ENCODE measurements at regions of chr11 and their contacts with region 1.

Region 1: DNA sequence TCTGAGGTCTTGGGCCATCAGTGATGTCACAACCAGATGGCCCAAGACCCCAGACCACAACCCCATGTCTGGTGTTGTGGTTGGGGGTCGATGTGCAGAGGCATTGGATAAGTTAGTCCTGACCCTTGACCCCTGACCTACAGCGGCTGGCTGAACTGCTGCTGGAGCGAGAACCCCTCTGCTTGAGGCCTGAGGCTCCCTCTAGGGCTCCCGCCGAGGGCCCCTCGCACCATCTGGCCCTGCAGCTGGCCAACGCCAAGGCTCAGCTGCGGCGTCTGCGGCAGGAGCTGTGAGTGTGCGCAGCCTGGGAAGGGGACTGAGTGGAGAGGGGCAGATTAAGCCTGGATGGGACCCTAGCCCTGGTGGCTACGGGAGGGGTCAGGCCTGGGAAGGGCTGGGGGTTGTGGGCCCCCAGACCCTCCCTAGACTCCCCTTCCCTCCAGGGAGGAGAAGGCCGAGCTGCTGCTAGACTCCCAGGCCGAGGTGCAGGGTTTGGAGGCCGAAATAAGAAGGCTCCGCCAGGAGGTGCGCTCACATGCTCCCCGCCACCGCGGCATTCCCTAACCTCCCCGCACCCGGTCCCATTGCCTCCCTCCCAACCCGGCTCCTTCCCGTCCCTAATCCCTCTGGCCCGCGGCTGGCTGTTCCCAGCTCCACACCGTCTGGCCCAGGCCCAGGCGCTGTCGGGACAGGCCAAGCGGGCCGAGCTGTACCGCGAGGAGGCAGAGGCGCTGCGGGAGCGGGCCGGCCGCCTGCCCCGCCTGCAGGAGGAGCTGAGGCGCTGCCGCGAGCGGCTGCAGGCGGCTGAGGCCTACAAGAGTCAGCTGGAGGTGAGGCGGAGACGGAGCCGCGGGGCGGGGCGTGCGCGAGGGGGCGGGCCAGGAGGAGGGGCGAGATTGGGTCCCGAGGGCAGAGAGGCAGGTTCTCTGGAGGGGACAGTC is 2.1 kb downstream of the CCDC88B start:
- DNase-seq: peak; percentile 98
- H3K4me3 Mint-ChIP-seq: peak overlapping the region; percentile 99
- H3K27ac Mint-ChIP-seq: no peak overlapping the region
- H3K4me1 Mint-ChIP-seq: peaks cover 31% of the 10 kb centered on the region
- H3K27me3 Mint-ChIP-seq: no peaks in the 10 kb centered on the region

Region 2: DNA sequence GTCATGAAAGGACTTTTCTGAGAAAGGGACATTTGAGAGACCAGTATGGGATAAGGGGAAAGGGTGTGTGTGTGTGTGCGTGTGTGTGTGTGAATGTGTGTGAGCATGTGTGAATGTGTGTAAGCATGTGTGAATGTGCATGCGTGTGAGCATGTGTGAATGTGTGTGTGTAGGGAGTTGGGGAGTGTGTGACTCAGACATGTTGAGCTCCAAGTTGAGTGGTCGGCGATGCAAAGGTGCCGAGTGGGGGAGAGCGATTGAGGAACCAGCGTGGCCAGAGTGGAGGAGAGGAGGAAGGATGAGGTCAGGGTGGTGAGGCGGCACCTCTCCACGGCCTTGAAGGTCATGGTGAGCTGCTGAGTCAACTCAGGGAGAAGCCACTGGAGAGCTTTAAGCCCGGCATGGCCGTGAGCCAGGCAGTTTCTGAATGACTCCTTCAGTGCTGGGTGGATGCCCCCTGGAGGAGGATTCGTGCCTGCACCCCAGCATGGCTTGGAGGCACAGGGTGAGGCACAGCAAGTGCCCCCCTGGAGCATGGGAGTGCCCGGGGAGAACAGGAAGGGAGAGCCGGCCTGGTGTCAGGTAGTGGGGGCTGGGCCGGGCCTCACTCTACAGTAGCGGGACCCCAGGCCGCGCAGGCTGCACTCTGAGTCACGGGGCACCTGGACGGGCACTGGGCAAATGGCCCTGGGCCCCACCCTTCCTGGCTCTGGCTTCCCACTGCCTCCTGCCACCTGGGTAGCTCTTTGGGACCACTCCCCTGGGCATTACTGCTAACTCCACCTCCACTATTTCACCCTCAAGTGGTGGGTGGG is 10.4 kb before region 1 on chr11:
- intact Hi-C with region 1: loop called (anchors 1 kb)
- DNase-seq: peak; percentile 91
- H3K4me3 Mint-ChIP-seq: peak overlapping the region; percentile 39
- H3K27ac Mint-ChIP-seq: peak overlapping the region; percentile 88
- H3K4me1 Mint-ChIP-seq: peaks cover 14% of the 10 kb centered on the region
- H3K27me3 Mint-ChIP-seq: no peaks in the 10 kb centered on the region

Region 3: DNA sequence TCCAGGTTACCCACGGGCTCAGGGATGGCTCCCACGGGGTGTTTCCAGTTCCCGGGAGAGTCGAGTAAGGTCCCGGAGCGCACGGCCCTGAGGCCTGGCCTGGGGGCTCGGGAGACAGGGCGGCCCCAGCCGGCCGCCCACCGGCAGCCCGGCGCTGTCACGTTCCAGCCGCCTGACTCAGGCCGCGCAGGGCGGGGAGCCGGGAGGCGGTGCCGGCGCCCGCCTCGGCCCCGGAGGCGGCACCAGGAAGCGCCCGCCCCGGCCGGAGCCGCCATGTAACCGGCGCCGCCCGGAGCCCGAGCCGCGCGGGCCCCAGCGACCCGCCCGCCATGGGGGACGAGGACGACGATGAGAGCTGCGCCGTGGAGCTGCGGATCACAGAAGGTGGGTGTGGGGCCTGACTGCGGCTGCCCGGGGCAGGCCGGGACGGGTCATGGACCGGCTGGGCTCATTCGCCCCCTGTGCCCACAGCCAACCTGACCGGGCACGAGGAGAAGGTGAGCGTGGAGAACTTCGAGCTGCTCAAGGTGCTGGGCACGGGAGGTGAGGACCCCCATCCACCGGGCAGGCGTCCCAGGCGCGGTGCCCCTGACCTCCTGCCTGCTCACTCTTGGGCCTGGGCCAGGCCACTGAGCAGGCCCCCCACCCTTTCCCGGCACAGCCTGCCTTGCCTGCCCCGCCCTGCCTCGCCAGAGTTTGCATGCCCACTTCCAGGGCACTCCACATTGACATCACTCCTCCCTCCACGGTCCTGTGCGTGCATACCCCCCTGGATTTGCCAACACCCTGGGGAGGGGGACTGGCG is 17.0 kb after region 1 on chr11 and contains the start of gene RPS6KA4:
- intact Hi-C with region 1: loop called (anchors 1 kb)
- DNase-seq: peak; percentile 90
- H3K4me3 Mint-ChIP-seq: peak within 1 kb of the TSS; percentile 94
- H3K27ac Mint-ChIP-seq: peak within 1 kb of the TSS; percentile 88
- H3K4me1 Mint-ChIP-seq: peaks cover 20% of the 10 kb centered on the region
- H3K27me3 Mint-ChIP-seq: no peaks in the 10 kb centered on the region
- total RNA-seq, gene RPS6KA4: 46.3 and 48.6 TPM in 2 replicates

Region 4: DNA sequence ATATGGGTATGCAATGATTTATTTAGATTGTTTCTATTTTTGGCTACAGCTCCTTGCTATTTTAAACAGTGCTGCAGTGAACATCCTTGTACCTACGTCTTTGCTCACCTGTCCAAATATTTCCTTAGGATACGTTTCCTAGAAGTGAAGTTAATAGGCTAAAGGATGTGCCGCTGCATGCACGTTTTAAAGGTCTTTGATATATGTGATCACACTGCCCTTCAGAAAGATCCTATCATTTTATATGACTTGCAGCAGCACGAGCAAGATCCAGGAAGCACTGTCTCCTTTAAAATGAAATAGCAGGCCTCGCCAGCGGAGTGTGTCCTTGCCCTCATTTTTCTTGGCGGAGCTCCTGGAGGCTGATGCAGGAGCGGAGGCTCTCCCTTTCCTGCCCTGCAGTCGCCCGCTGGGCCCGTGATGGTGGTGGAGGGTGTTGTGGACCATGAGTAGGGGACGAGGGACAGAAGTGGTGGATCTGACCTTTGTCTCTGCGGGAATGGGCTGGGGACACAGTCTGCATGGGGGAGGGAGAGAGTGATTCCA is 36.3 kb after region 1 on chr11:
- intact Hi-C with region 1: no loop called
- DNase-seq: no peak
- H3K4me3 Mint-ChIP-seq: no peak overlapping the region
- H3K27ac Mint-ChIP-seq: no peak overlapping the region
- H3K4me1 Mint-ChIP-seq: peaks cover 4% of the 10 kb centered on the region
- H3K27me3 Mint-ChIP-seq: no peaks in the 10 kb centered on the region

Region 5: GRCh38 chr11:64396079-64396591 is 54.0 kb after region 1 on chr11:
- intact Hi-C with region 1: no loop called
- DNase-seq: no peak
- H3K4me3 Mint-ChIP-seq: no peak overlapping the region
- H3K27ac Mint-ChIP-seq: no peak overlapping the region
- H3K4me1 Mint-ChIP-seq: no peaks in the 10 kb centered on the region
- H3K27me3 Mint-ChIP-seq: peaks cover 5% of the 10 kb centered on the region

Region 6: GRCh38 chr11:64566042-64566914 is 224.2 kb after region 1 on chr11:
- intact Hi-C with region 1: no loop called
- DNase-seq: peak; percentile 83
- H3K4me3 Mint-ChIP-seq: peak overlapping the region; percentile 4
- H3K27ac Mint-ChIP-seq: no peak overlapping the region
- H3K4me1 Mint-ChIP-seq: peaks cover 6% of the 10 kb centered on the region
- H3K27me3 Mint-ChIP-seq: no peaks in the 10 kb centered on the region